MCF 10A (cell line): ENCODE measurements at regions of chr3 and their contacts with region 1.

Region 1: GRCh38 chr3:159872374-159873109 is 116.1 kb upstream of the IL12A start:
- DNase-seq: peak; percentile 89
- H3K4me3 Mint-ChIP-seq: no peak overlapping the region
- H3K27ac Mint-ChIP-seq: peak overlapping the region; percentile 84
- H3K4me1 Mint-ChIP-seq: peaks cover 22% of the 10 kb centered on the region
- H3K27me3 Mint-ChIP-seq: no peaks in the 10 kb centered on the region
- CTCF ChIP-seq: peak; percentile 12

Region 2: DNA sequence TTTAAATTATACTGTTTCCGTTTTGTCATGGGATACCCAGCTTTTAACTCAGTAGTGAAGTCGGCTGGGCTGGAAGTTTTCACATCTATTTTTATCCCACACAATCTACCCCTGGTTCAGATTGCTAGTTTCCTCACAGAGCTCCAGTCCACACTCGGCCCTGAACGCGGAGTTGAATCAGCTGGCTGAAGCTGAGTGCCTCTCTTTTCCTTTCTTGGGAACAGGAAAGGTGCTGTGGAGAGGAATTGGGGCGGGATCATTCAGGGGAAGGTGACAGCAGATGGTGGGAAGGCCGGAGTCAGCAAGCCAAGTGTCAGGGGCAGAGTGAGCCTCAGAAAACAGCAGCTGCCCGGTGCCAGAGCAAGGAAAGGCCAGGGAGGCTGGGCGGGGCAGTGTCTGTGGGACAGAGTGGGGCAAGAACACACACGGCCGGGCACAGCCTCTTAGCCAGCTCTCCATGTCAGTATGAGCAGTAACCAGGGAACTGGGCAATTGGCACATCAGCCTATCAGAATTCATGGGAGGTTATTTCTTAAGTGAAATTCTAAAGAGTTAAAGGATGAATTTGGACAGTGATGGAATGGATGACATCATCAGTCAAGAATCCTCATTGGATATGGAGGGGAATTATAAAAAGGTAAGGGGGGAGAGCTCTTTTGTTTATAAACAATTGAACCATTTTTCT is 19.6 kb before region 1 on chr3:
- CTCF ChIA-PET with region 1: interaction called, 18 read pairs
- POLR2A ChIA-PET with region 1: interaction called, 49 read pairs
- intact Hi-C with region 1: loop called (anchors 2 kb)
- DNase-seq: peak; percentile 57
- H3K4me3 Mint-ChIP-seq: peak overlapping the region; percentile 66
- H3K27ac Mint-ChIP-seq: peak overlapping the region; percentile 92
- H3K4me1 Mint-ChIP-seq: peaks cover 38% of the 10 kb centered on the region
- H3K27me3 Mint-ChIP-seq: no peaks in the 10 kb centered on the region
- CTCF ChIP-seq: no peak

Region 3: DNA sequence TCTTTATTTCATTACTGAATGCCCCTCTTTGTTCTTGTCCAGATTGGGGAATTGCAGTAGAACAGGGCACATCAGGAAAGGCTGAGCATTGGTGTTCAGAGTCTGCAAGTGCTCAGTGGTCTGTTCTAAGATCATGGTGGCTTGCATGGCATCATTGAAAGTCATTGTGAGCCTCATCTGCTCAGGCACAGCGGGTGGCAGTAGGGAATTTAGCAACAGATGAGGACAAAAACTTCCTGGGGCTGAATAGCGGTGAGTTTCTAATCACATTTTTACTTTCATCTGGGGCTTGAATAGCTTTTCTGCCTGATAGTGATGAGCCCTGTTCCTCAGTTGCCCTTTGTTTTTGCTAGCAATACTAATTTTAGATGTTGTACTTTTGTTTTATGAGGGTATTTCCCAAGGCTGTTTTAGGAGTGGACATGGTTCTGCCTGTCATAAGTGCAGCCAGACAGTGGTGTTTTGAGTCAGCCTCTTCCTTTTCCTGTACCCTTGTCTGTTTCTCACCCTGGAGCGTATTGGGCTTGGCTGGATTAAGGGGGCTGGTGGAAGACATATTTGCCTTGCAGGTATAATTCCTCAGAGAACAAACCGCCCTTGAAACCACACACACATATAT is 11.1 kb before region 1 on chr3:
- CTCF ChIA-PET with region 1: interaction called, 12 read pairs
- POLR2A ChIA-PET with region 1: interaction called, 49 read pairs
- intact Hi-C with region 1: no loop called
- DNase-seq: no peak
- H3K4me3 Mint-ChIP-seq: no peak overlapping the region
- H3K27ac Mint-ChIP-seq: peak overlapping the region; percentile 65
- H3K4me1 Mint-ChIP-seq: peaks cover 42% of the 10 kb centered on the region
- H3K27me3 Mint-ChIP-seq: no peaks in the 10 kb centered on the region
- CTCF ChIP-seq: no peak